ENCODE measurements at regions of chr19 and their contacts with region 1.

Region 1: GRCh38 chr19:33176670-33177416 is 17.3 kb upstream of the LRP3 start:
- DNase-seq: peak; percentile 89 to 96
- ATAC-seq: peak; percentile 96 to 97
- H3K4me3 ChIP-seq: peak overlapping the region; percentile 77 to 100 (median 84)
- H3K27ac ChIP-seq: peak overlapping the region; percentile 89 to 97 (median 92)
- H3K4me1 ChIP-seq: peaks cover 17 to 29% of the 10 kb centered on the region in 2 donors
- H3K27me3 ChIP-seq: no peaks in the 10 kb centered on the region
- CTCF ChIP-seq: peak; percentile 25 to 45 (median 32)
- POLR2A ChIP-seq: peak; percentile 77 to 79

Region 2: DNA sequence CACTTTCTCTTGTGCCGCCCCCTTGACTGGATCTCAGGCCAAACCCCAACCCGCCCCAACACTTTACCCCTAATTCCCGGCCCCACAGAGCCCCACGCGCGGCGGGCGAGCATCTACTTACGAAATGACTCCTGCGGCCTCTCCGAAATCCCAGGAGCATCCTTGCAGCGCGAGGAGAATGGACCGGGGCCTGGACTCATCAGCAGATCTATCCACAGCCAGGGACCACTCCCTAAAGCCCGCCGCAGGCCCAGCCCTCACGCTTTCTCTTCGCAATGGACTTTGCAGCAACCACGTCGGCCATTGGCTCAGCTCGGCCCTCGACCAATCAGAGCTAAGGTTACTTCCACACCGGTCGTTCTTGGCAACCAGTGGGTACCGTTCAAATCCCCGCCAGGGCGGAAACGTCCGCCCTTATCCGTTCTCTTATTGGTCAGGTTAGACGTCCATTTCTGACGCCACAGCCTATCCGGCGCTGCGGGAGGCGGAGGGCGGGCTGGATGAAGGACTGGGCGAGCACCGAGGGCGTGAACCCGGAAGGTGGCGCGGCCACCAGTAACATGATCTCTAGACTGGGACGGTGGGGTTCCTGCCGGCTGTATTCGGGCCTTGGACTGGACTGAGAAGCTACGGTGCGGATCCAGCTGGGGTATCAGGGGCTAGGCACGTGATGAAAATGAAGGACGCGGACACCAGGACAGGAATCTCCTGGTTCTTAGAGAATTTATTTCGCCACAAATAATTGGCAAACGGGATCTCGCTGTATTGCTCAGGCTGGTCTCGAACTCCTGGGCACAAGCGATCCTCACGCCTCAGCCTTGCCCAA is 204.9 kb before region 1 on chr19 and contains the starts of genes CEP89 and FAAP24:
- in situ Hi-C with region 1: no loop called
- intact Hi-C with region 1: loop called (anchors 5 kb)
- DNase-seq: peak; percentile 97 to 99
- ATAC-seq: peak; percentile 100
- H3K4me3 ChIP-seq: peak within 1 kb of the TSS; percentile 65 to 96 (median 84)
- H3K27ac ChIP-seq: peak within 1 kb of the TSS; percentile 67 to 82 (median 75)
- H3K4me1 ChIP-seq: peaks cover 8 to 13% of the 10 kb centered on the region in 2 donors
- H3K27me3 ChIP-seq: no peaks in the 10 kb centered on the region
- CTCF ChIP-seq: no peak
- POLR2A ChIP-seq: no peak
- total RNA-seq, gene CEP89: 3.4 to 20.9 (median 9.5) TPM
- total RNA-seq, gene FAAP24: 0.16 to 0.97 TPM in 2 of 4 donors, not detected in the others

Region 3: GRCh38 chr19:33080761-33081681 is 95.8 kb before region 1 on chr19 and contains the start of gene GPATCH1:
- in situ Hi-C with region 1: no loop called
- intact Hi-C with region 1: loop called (anchors 1 kb)
- DNase-seq: peak; percentile 68 to 78
- ATAC-seq: peak; percentile 88 to 96
- H3K4me3 ChIP-seq: peak within 1 kb of the TSS; percentile 82 to 97 (median 96)
- H3K27ac ChIP-seq: peak within 1 kb of the TSS; percentile 82 to 90 (median 86)
- H3K4me1 ChIP-seq: peaks cover 15 to 16% of the 10 kb centered on the region in 2 donors
- H3K27me3 ChIP-seq: no peaks in the 10 kb centered on the region
- CTCF ChIP-seq: no peak
- POLR2A ChIP-seq: peak in 1 of 2 donors; percentile 33
- total RNA-seq, gene GPATCH1: 2.2 to 5.3 (median 4.6) TPM

Region 4: GRCh38 chr19:33143897-33144405 is 32.9 kb before region 1 on chr19:
- in situ Hi-C with region 1: loop called in 2 of 4 experiments (anchors 5 kb)
- intact Hi-C with region 1: loop called (anchors 2 kb)
- DNase-seq: peak; percentile 24 to 44
- ATAC-seq: peak; percentile 96 to 97
- H3K4me3 ChIP-seq: peak overlapping the region in 1 of 4 donors; percentile 31
- H3K27ac ChIP-seq: no peak overlapping the region
- H3K4me1 ChIP-seq: no peaks in the 10 kb centered on the region
- H3K27me3 ChIP-seq: no peaks in the 10 kb centered on the region
- CTCF ChIP-seq: peak; percentile 85 to 96 (median 89)
- POLR2A ChIP-seq: no peak

Region 5: GRCh38 chr19:33521480-33522370 is 344.9 kb after region 1 on chr19 and contains the start of gene PEPD:
- in situ Hi-C with region 1: no loop called
- intact Hi-C with region 1: loop called (anchors 1 kb)
- DNase-seq: peak; percentile 82 to 87
- ATAC-seq: peak; percentile 97 to 98
- H3K4me3 ChIP-seq: peak within 1 kb of the TSS; percentile 72 to 99 (median 83)
- H3K27ac ChIP-seq: peak within 1 kb of the TSS; percentile 66 to 79 (median 78)
- H3K4me1 ChIP-seq: peaks cover 9 to 18% of the 10 kb centered on the region in 2 donors
- H3K27me3 ChIP-seq: no peaks in the 10 kb centered on the region
- CTCF ChIP-seq: no peak
- POLR2A ChIP-seq: peak; percentile 78 to 85
- total RNA-seq, gene PEPD: 33.9 to 57.0 (median 45.0) TPM

Measured in gastrocnemius medialis (tissue), 4 donors.